HEK293 (cell line): ENCODE measurements at regions of chr17 and their contacts with region 1.

Region 1: GRCh38 chr17:79045842-79046196 is 21.9 kb downstream of the C1QTNF1 start:
- H3K4me3 ChIP-seq: no peak overlapping the region
- H3K27ac ChIP-seq: no peak overlapping the region
- H3K4me1 ChIP-seq: no peaks in the 10 kb centered on the region
- CTCF ChIP-seq: peak; percentile 91

Region 2: GRCh38 chr17:78979780-78980623 is 65.8 kb before region 1 on chr17 and contains the start of gene LGALS3BP:
- CTCF ChIA-PET with region 1: no interaction called
- POLR2A ChIA-PET with region 1: no interaction called
- H3K4me3 ChIP-seq: peak within 1 kb of the TSS; percentile 43
- H3K27ac ChIP-seq: peak within 1 kb of the TSS; percentile 83
- H3K4me1 ChIP-seq: peaks cover 26% of the 10 kb centered on the region
- CTCF ChIP-seq: no peak; the same call in 1 of the 2 replicates

Region 3: DNA sequence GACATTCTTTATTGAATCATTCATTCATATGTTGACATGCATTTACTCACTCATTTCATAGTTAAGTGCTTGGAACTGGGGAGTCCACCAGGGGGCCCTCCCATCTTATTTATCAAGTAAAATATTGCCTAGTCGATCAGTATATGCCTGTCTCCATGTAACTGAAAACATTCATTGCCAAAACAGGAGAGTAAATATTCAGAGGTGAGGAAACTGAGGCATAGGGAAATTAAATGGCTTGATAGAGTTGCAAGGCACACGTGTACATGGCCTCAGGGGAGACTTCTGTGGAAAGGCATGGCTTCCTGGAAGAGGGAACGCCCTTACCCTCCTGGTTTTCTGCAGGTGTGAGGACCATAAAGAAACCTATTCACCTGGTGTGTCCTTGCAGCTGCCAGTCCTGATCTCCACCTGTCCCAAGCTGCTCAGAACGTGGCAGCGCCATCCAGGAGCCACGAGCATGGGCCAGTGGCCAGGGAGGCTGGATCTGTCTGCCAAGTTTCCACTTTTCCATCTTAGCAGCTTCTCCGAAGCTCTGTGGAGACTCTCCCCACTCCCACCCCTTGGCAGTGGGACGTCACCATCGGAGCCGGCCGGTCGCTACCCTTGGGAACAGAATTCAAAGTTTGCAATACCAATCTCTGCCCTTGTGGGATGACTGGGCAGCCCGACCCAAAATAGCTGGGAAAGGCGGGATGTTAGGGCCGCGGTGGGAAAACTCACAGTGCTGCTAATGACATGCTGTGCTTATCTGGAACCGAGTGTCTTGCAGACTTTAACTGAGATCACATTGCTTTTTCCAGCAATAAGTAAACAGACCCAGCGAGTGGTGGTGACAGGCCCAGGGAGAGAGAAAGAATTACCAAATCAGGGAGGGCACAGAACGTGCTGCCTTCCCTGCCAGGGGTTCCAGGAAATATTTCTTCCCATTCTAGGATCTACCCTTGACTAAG is 25.9 kb before region 1 on chr17:
- CTCF ChIA-PET with region 1: interaction called, 122 read pairs
- POLR2A ChIA-PET with region 1: no interaction called
- H3K4me3 ChIP-seq: no peak overlapping the region
- H3K27ac ChIP-seq: peak overlapping the region; percentile 14; the same call in 1 of the 2 replicates
- H3K4me1 ChIP-seq: peaks cover 21% of the 10 kb centered on the region
- CTCF ChIP-seq: no peak

Region 4: GRCh38 chr17:79065105-79065670 is 19.4 kb after region 1 on chr17:
- CTCF ChIA-PET with region 1: interaction called, 36 read pairs
- POLR2A ChIA-PET with region 1: no interaction called
- H3K4me3 ChIP-seq: no peak overlapping the region
- H3K27ac ChIP-seq: no peak overlapping the region
- H3K4me1 ChIP-seq: no peaks in the 10 kb centered on the region
- CTCF ChIP-seq: no peak

Region 5: DNA sequence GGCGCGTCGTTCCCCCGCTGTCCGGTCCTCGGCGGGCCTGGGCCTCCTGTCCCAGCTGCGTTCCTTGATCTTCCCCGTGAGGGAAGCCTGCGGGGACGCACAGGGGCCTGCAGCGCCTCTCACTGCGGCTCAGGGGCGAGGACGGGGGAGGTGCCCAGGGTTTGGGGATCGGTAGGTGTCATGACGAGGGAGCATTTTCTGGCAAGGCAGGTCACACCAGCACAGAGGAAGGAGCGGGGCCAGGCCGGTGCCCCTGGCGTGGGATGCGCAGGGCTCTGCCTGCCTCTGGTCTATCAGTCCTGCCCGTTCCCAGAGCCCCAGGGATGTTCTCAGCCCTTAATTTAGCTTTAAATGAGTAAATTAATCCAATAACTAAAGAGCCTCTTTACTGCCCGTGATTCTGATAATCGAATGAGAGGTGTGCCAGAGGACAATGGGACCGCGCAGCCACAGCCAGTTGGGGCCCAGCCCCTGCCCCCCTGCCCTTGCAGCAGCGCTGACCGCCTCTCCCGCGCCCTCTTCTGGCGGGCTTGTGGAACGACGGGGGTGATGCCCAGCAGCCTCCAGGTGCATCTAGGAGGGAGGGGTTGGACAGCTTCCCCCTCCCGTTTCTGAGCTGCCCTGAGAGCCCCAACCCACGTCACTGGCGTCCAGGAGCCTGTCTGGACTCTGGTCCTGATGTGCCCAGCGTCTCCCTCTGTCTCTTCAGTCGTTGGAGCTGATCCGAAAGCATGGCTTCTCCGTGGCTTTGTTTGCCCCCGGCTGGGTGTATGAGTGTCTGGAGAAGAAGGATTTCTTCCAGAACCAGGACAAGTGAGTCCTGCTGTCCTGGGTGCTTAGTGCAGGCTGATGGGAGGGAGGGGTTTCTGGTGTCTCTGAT is 36.7 kb after region 1 on chr17:
- CTCF ChIA-PET with region 1: interaction called, 62 read pairs
- POLR2A ChIA-PET with region 1: no interaction called
- H3K4me3 ChIP-seq: no peak overlapping the region
- H3K27ac ChIP-seq: no peak overlapping the region
- H3K4me1 ChIP-seq: no peaks in the 10 kb centered on the region
- CTCF ChIP-seq: peak; percentile 80

Region 6: DNA sequence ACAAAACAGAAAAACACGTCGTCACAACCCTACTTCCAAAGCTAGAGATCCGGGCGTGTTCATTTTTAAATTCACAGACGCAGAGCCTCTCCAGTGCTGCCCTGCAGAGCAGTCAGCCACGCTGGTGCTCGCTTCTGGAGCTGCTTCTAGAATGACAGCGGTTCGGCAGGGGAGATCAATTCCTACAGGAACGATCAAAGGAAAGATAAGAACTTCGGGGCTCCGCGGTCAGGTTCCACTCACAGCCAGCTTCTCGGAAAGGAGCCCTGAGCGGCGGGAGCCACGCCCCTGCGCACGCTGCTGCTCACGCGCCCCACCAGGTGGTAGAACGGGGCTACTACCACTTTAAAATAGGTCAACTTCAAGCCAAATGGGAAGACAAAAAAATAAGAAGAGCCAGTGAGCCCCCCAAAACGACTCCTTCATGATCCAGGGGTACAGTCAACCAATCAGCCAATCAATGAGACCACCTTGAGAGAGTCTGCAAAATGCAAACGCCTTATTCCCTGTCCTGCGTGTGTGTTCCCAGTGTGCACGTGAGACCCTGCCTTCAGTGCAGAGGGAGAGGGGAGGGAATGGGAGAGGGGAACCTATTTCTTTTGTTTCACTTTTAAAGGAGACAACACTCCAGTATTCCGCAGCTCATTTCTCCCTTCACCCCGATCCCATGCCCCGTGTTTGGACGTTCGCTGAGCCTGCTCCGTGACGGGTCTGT is 355.3 kb after region 1 on chr17:
- CTCF ChIA-PET with region 1: interaction called, 10 read pairs
- POLR2A ChIA-PET with region 1: no interaction called
- H3K4me3 ChIP-seq: peak overlapping the region; percentile 6; the same call in 1 of the 2 replicates
- H3K27ac ChIP-seq: no peak overlapping the region
- H3K4me1 ChIP-seq: no peaks in the 10 kb centered on the region
- CTCF ChIP-seq: peak; percentile 72